ENCODE measurements at regions of chr14 and their contacts with region 1.

Region 1: GRCh38 chr14:54881235-54881760 is 21.3 kb downstream of the GCH1 start:
- DNase-seq: no peak
- H3K4me3 ChIP-seq: peak overlapping the region in 1 of 2 experiments; percentile 16; a peak in 1 of 4 replicates
- H3K27ac ChIP-seq: peak overlapping the region; percentile 23 to 94; a peak in 3 of 4 replicates
- H3K4me1 ChIP-seq: peaks cover 0 to 49% of the 10 kb centered on the region in 2 experiments; a peak in 2 of 4 replicates
- H3K27me3 ChIP-seq: no peaks in the 10 kb centered on the region
- CTCF ChIP-seq: no peak
- EP300 ChIP-seq: no peak
- RAD21 ChIP-seq: no peak

Region 2: GRCh38 chr14:54818201-54819133 is 62.8 kb before region 1 on chr14:
- CTCF ChIA-PET with region 1: interaction called, 8 read pairs
- POLR2A ChIA-PET with region 1: interaction called, 17 read pairs
- DNase-seq: peak; percentile 76
- H3K4me3 ChIP-seq: peak overlapping the region in 1 of 2 experiments; percentile 12; a peak in 3 of 4 replicates
- H3K27ac ChIP-seq: peak overlapping the region; percentile 67 to 100
- H3K4me1 ChIP-seq: peaks cover 5 to 56% of the 10 kb centered on the region in 2 experiments; a peak in 3 of 4 replicates
- H3K27me3 ChIP-seq: no peaks in the 10 kb centered on the region
- CTCF ChIP-seq: no peak
- EP300 ChIP-seq: peak; percentile 63 to 98; a peak in 3 of 4 replicates
- RAD21 ChIP-seq: peak; percentile 28